PC-3 (cell line): ENCODE measurements at regions of chr2 and their contacts with region 1.

Region 1: GRCh38 chr2:166333801-166334200 is 41.9 kb downstream of the SCN9A start:
- DNase-seq: peak; percentile 72
- ATAC-seq: no peak
- H3K4me3 ChIP-seq: no peak overlapping the region
- H3K27ac ChIP-seq: no peak overlapping the region
- H3K4me1 ChIP-seq: peaks cover 45% of the 10 kb centered on the region
- H3K27me3 ChIP-seq: no peaks in the 10 kb centered on the region
- CTCF ChIP-seq: no peak

Region 2: DNA sequence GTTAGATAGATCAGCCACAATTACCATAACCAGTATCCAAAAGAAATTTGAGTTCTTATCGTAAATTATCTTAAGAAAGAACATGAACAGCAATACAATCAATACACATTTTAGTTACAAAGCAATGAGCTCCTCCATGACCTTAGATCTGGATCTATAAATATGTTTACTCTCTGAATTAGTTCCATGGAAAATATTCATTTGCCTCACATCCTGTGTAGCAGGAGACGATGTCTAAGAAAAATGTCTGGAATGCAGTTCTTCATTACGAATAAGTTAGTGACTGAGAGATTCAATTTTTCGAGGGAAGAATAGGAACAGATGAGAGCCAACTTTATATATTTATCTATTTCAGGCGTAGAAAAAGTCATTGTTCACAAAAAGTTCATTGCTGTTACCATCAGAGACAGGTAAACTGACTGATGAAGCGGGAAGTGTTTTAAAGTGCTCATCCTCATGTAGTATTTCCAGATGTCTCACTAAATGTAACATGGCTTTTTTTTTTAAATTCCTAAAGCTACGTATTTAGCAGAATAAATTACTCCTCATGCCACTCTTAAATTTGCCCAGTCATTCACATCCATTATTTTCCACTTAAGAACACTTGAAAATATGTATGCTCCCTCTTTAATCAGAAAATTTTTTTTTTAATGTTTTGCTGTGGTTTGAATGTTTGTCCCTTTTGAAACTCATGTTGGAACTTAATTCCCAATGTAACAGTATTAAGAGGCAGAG is 99.5 kb before region 1 on chr2:
- CTCF ChIA-PET with region 1: no interaction called
- POLR2A ChIA-PET with region 1: interaction called, 3 read pairs
- intact Hi-C with region 1: loop called (anchors 5 kb)
- DNase-seq: peak; percentile 97
- ATAC-seq: peak; percentile 64
- H3K4me3 ChIP-seq: peak overlapping the region; percentile 14; the same call in 1 of the 2 replicates
- H3K27ac ChIP-seq: peak overlapping the region; percentile 80
- H3K4me1 ChIP-seq: peaks cover 71% of the 10 kb centered on the region
- H3K27me3 ChIP-seq: no peaks in the 10 kb centered on the region
- CTCF ChIP-seq: no peak

Region 3: GRCh38 chr2:166314022-166314759 is 19.6 kb before region 1 on chr2:
- CTCF ChIA-PET with region 1: no interaction called
- POLR2A ChIA-PET with region 1: no interaction called
- intact Hi-C with region 1: loop called (anchors 1 kb)
- DNase-seq: peak; percentile 90
- ATAC-seq: peak; percentile 100
- H3K4me3 ChIP-seq: no peak overlapping the region
- H3K27ac ChIP-seq: peak overlapping the region; percentile 41
- H3K4me1 ChIP-seq: peaks cover 15% of the 10 kb centered on the region
- H3K27me3 ChIP-seq: no peaks in the 10 kb centered on the region
- CTCF ChIP-seq: no peak